ENCODE measurements at regions of chr13 and their contacts with region 1.

Region 1: DNA sequence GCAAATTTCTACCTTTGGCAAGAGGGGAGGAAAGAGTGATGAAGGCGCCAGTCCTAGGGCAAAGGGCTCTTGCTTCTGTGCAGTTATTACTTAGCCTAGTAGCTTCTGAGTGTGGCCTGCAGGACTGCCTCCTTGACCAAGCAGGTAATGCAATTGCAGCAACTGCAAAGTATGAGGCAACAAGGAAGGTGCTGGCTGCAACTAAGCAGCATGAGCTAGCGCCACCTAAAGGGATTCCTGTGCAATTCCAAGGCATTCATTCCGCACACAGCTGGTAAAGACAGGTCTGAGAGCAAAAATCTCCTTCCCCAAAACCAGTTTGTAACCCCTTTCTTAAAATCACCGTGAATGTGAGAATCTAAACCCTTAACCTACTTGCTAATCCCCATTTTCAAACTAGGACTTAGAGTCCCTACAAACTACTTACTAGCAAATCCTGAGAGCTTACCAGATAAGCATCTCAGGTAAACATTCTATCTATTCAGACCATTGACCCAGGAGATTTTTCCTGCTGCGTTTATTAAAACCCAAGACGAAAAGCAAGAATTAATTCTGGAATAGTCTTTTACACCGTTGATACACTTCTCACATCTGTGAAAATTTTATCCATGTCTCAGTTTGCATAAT is 62.9 kb downstream of the DCT start:
- DNase-seq: peak; percentile 56 to 57
- H3K4me3 ChIP-seq: no peak overlapping the region
- H3K27ac ChIP-seq: no peak overlapping the region
- H3K4me1 ChIP-seq: no peaks in the 10 kb centered on the region
- H3K27me3 ChIP-seq: no peaks in the 10 kb centered on the region
- CTCF ChIP-seq: peak; percentile 75 to 98 (median 79)
- EP300 ChIP-seq: no peak
- POLR2A ChIP-seq: no peak
- RAD21 ChIP-seq: peak; percentile 89 to 91

Region 2: GRCh38 chr13:94394723-94395122 is 21.8 kb before region 1 on chr13:
- CTCF ChIA-PET with region 1: interaction called, 14 read pairs
- POLR2A ChIA-PET with region 1: no interaction called
- DNase-seq: no peak
- H3K4me3 ChIP-seq: no peak overlapping the region
- H3K27ac ChIP-seq: no peak overlapping the region
- H3K4me1 ChIP-seq: no peaks in the 10 kb centered on the region
- H3K27me3 ChIP-seq: no peaks in the 10 kb centered on the region
- CTCF ChIP-seq: no peak
- EP300 ChIP-seq: no peak
- POLR2A ChIP-seq: no peak
- RAD21 ChIP-seq: no peak

Region 3: GRCh38 chr13:94427313-94427953 is 10.9 kb after region 1 on chr13:
- CTCF ChIA-PET with region 1: interaction called, 17 read pairs
- POLR2A ChIA-PET with region 1: no interaction called
- DNase-seq: no peak
- H3K4me3 ChIP-seq: no peak overlapping the region
- H3K27ac ChIP-seq: no peak overlapping the region
- H3K4me1 ChIP-seq: no peaks in the 10 kb centered on the region
- H3K27me3 ChIP-seq: no peaks in the 10 kb centered on the region; a peak in 1 of 7 replicates
- CTCF ChIP-seq: no peak
- EP300 ChIP-seq: no peak
- POLR2A ChIP-seq: no peak
- RAD21 ChIP-seq: no peak

Region 4: DNA sequence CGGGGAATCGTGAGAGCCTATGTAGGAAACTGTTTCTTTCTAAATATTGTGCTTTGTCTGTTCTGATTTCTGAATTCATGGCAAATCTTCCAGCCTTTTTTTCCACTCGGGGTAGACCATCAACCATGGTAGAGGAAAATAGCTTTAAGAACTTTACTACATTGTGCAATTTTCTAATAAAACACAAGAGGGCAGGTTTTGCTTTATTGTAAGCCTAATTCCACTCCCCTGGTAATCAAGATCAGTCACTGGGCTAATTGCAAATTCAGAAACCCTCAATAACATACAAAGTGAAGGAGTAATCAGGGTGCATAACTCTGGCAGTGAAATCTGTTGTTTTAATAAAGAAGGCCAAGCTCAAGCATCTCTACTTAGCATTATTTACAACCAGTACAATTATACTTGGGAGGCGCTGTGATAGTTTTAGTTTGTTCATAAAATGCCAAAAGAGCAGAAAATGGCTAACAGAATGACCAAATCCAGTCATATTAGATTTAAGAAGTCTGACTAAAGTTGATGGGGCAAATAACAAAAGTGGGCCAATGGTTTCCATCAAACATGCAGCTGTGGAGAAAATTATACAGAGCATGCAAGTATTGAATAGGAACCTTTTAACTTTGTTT is 19.1 kb after region 1 on chr13:
- CTCF ChIA-PET with region 1: interaction called, 23 read pairs
- POLR2A ChIA-PET with region 1: interaction called, 3 read pairs
- DNase-seq: no peak
- H3K4me3 ChIP-seq: no peak overlapping the region
- H3K27ac ChIP-seq: no peak overlapping the region
- H3K4me1 ChIP-seq: peaks cover 0 to 3% (median under 1%) of the 10 kb centered on the region in 4 experiments; a peak in 2 of 7 replicates
- H3K27me3 ChIP-seq: no peaks in the 10 kb centered on the region; a peak in 1 of 7 replicates
- CTCF ChIP-seq: peak in 2 of 3 experiments; percentile 39 to 43; a peak in 2 of 4 replicates
- EP300 ChIP-seq: no peak
- POLR2A ChIP-seq: no peak
- RAD21 ChIP-seq: peak; percentile 78 to 82